Activated T-helper 2 cell treated with anti-CD3 and anti-CD28 coated beads, Interferon-gamma antibody, Interleukin-2, Interleukin-4, amounts not matched to agents 10 μg/mL and 5 μg/mL and 100 μg/mL, durations not matched to agents 14 hours and 24 hours and 36 hours (primary cell): ENCODE measurements at regions of chr10 and their contacts with region 1.

Region 1: GRCh38 chr10:99711129-99711719 is 20.7 kb downstream of the COX15 start:
- DNase-seq: peak; percentile 13
- H3K4me3 Mint-ChIP-seq: no peak overlapping the region
- H3K27ac Mint-ChIP-seq: no peak overlapping the region
- H3K4me1 Mint-ChIP-seq: peaks cover 12% of the 10 kb centered on the region
- H3K27me3 Mint-ChIP-seq: no peaks in the 10 kb centered on the region

Region 2: GRCh38 chr10:99395750-99396445 is 315.3 kb before region 1 on chr10:
- intact Hi-C with region 1: loop called (anchors 1 kb)
- DNase-seq: no peak
- H3K4me3 Mint-ChIP-seq: no peak overlapping the region
- H3K27ac Mint-ChIP-seq: peak overlapping the region; percentile 43
- H3K4me1 Mint-ChIP-seq: peaks cover 7% of the 10 kb centered on the region
- H3K27me3 Mint-ChIP-seq: no peaks in the 10 kb centered on the region

Region 3: DNA sequence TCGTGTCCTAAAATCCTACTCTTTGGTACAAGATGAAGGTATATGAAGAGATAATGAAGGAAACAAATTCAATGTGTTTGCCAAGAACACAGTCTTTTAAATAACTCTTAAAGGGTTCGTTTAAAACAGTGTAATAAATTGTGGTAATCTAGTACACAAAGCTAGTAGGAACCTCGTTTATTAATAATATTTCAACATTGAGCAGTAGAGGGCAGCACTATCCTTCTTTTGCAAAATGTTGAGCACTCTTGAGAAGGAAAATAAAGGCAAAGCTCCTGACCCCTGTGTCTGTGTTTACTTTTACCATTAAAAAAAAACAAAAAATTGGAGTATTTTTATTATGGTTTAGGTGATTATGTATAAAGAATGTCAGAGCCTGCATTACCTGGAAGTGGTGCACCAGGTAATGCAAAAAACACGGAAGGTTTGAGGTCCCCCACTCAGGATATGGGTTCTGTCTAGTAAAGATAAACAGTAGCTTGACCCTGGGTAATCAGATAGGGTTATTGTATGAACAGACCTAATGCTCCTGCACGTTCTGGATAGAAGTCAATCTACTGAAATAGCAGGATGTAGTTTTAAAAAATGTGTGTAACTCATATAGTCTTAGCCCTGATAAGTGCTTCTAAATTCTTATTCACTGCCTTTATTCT is 275.1 kb before region 1 on chr10:
- intact Hi-C with region 1: loop called (anchors 1 kb)
- DNase-seq: no peak
- H3K4me3 Mint-ChIP-seq: no peak overlapping the region
- H3K27ac Mint-ChIP-seq: no peak overlapping the region
- H3K4me1 Mint-ChIP-seq: peaks cover 15% of the 10 kb centered on the region
- H3K27me3 Mint-ChIP-seq: no peaks in the 10 kb centered on the region

Region 4: DNA sequence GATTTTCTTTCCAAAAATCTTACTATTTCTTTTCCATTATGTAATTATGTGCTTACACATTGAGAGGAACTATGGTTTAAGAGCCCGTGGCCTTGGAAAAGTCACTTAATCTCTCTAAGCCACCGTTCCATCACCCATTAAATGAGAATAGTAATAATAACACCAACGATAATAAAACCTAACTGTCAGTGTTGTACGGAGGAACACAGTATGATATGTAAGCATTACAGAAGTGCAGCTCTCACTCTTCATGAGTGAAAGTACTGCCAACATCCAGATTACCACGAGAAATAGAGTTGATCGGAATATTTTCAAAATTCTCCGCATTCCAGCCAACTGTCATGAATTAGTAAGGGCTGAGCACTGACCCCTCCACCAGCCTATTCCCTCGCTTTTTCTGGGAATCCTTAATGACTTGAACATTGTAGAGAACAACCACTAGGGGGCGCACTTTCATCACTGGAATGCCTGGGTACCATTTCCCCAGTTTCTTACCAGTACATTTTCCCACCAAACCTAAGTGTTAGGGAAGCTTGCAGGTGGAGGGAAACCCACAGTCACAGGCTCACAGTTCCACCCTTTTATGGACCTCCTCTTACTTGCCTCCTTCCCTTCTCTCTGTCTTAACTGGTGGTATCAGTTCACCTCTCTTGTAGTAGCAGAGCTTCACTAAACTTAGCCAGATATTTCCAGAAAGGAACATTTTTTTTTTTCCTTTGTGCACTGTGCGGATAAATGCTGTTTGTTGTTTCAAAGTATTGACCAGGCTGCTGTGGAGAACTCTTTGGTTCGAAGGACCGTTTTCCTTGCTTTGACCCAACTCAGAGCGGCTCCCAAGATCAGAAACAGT is 150.7 kb before region 1 on chr10:
- intact Hi-C with region 1: loop called (anchors 2 kb)
- DNase-seq: no peak
- H3K4me3 Mint-ChIP-seq: no peak overlapping the region
- H3K27ac Mint-ChIP-seq: no peak overlapping the region
- H3K4me1 Mint-ChIP-seq: peaks cover 8% of the 10 kb centered on the region
- H3K27me3 Mint-ChIP-seq: peaks cover 30% of the 10 kb centered on the region